ENCODE measurements at regions of chr11 and their contacts with region 1.

Region 1: DNA sequence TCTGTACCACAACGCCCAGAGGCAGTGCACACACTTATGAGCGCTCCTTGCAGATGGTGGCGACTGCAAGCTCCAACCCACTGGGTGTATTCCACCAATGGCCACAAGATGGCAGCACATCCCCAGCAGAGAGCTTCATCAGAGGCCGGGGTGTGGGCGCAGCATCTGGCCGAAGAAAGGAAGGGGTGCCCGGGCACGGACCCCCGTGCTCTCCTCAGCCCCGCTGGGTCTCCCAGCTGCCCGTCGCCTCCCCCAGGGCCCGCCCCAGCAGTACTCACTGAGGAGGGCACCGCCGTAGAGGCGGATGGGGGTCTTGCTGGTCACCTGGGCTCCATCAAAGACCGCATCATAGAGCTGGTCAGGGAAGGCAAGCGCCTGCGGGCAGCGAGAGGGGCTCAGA is 14.2 kb downstream of the TP53I11 start:
- DNase-seq: no peak
- ATAC-seq: peak; percentile 97
- H3K4me3 ChIP-seq: no peak overlapping the region
- H3K27ac ChIP-seq: no peak overlapping the region
- H3K4me1 ChIP-seq: no peaks in the 10 kb centered on the region
- H3K27me3 ChIP-seq: no peaks in the 10 kb centered on the region
- CTCF ChIP-seq: peak; percentile 86 to 94 (median 92)
- EP300 ChIP-seq: no peak
- POLR2A ChIP-seq: no peak
- RAD21 ChIP-seq: peak; percentile 97

Region 2: GRCh38 chr11:44737245-44738085 is 199.1 kb before region 1 on chr11:
- CTCF ChIA-PET with region 1: no interaction called
- POLR2A ChIA-PET with region 1: no interaction called
- RAD21 ChIA-PET with region 1: no interaction called
- SMC1A ChIA-PET with region 1: no interaction called
- in situ Hi-C with region 1: no loop called
- intact Hi-C with region 1: no loop called
- DNase-seq: no peak
- ATAC-seq: no peak
- H3K4me3 ChIP-seq: no peak overlapping the region
- H3K27ac ChIP-seq: no peak overlapping the region
- H3K4me1 ChIP-seq: no peaks in the 10 kb centered on the region
- H3K27me3 ChIP-seq: peaks cover 0 to 2% of the 10 kb centered on the region in 2 experiments; a peak in 3 of 4 replicates
- CTCF ChIP-seq: no peak
- EP300 ChIP-seq: no peak
- POLR2A ChIP-seq: no peak
- RAD21 ChIP-seq: no peak

Region 3: GRCh38 chr11:45209891-45210699 is 273.6 kb after region 1 on chr11:
- CTCF ChIA-PET with region 1: no interaction called
- POLR2A ChIA-PET with region 1: no interaction called
- RAD21 ChIA-PET with region 1: no interaction called
- SMC1A ChIA-PET with region 1: no interaction called
- in situ Hi-C with region 1: no loop called
- intact Hi-C with region 1: no loop called
- DNase-seq: no peak
- ATAC-seq: no peak; the same call in 1 of the 3 replicates
- H3K4me3 ChIP-seq: no peak overlapping the region
- H3K27ac ChIP-seq: no peak overlapping the region
- H3K4me1 ChIP-seq: no peaks in the 10 kb centered on the region
- H3K27me3 ChIP-seq: no peaks in the 10 kb centered on the region
- CTCF ChIP-seq: no peak
- EP300 ChIP-seq: no peak
- POLR2A ChIP-seq: no peak
- RAD21 ChIP-seq: no peak

Region 4: GRCh38 chr11:45339729-45340519 is 403.4 kb after region 1 on chr11:
- CTCF ChIA-PET with region 1: interaction called, 3 read pairs
- POLR2A ChIA-PET with region 1: no interaction called
- RAD21 ChIA-PET with region 1: no interaction called
- SMC1A ChIA-PET with region 1: no interaction called
- in situ Hi-C with region 1: loop called (anchors 25 kb)
- intact Hi-C with region 1: no loop called
- DNase-seq: peak; percentile 58
- ATAC-seq: peak; percentile 99
- H3K4me3 ChIP-seq: peak overlapping the region; percentile 50; the same call in 1 of the 2 replicates
- H3K27ac ChIP-seq: no peak overlapping the region; the same call in 1 of the 2 replicates
- H3K4me1 ChIP-seq: peaks cover 10% of the 10 kb centered on the region; the same call in 1 of the 2 replicates
- H3K27me3 ChIP-seq: peaks cover 0 to 4% of the 10 kb centered on the region in 2 experiments; a peak in 1 of 4 replicates
- CTCF ChIP-seq: peak; percentile 92 to 97 (median 93); a peak in 5 of 6 replicates
- EP300 ChIP-seq: no peak
- POLR2A ChIP-seq: no peak
- RAD21 ChIP-seq: peak; percentile 53

Region 5: GRCh38 chr11:45413156-45413858 is 476.8 kb after region 1 on chr11:
- CTCF ChIA-PET with region 1: no interaction called
- POLR2A ChIA-PET with region 1: no interaction called
- RAD21 ChIA-PET with region 1: no interaction called
- SMC1A ChIA-PET with region 1: no interaction called
- in situ Hi-C with region 1: no loop called
- intact Hi-C with region 1: no loop called
- DNase-seq: no peak
- ATAC-seq: no peak
- H3K4me3 ChIP-seq: no peak overlapping the region
- H3K27ac ChIP-seq: no peak overlapping the region
- H3K4me1 ChIP-seq: no peaks in the 10 kb centered on the region
- H3K27me3 ChIP-seq: peaks cover 4 to 10% of the 10 kb centered on the region in 2 experiments; a peak in 3 of 4 replicates
- CTCF ChIP-seq: no peak
- EP300 ChIP-seq: no peak
- POLR2A ChIP-seq: no peak
- RAD21 ChIP-seq: no peak